GM13977 (cell line): ENCODE measurements at regions of chr17 and their contacts with region 1.

Region 1: DNA sequence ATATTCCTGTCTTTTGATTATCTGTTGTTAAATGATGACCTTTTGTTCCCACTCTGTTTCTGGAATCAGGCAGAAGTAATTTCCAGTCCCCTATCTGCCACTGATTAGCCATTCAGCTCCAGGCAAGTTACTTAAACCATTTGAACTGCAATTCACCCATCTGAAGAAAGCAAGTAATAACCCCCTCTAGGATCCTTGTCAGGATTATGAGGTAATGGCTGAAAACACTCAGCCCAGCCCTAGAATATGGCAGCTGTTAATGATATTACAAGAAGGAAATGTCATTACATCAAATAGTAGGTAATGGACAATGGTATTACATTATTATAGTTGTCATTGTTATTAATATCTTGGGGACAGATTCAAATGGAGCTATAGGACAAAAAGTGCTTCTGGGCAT is 16.0 kb upstream of the SLC47A1 start:
- DNase-seq: no peak
- CTCF ChIP-seq: no peak

Region 2: GRCh38 chr17:19457830-19458271 is 59.8 kb before region 1 on chr17:
- in situ Hi-C with region 1: no loop called
- DNase-seq: no peak
- CTCF ChIP-seq: no peak

Region 3: GRCh38 chr17:19766422-19767270 is 248.9 kb after region 1 on chr17:
- in situ Hi-C with region 1: loop called (anchors 5 kb)
- DNase-seq: peak; percentile 84
- CTCF ChIP-seq: peak; percentile 99